ENCODE measurements at regions of chr3 and their contacts with region 1.

Region 1: GRCh38 chr3:70358978-70359580 is 46.6 kb upstream of the MDFIC2 start:
- DNase-seq: no peak
- H3K4me3 ChIP-seq: no peak overlapping the region
- H3K27ac ChIP-seq: no peak overlapping the region
- H3K27me3 ChIP-seq: no peaks in the 10 kb centered on the region
- CTCF ChIP-seq: peak; percentile 62 to 89 (median 74)

Region 2: DNA sequence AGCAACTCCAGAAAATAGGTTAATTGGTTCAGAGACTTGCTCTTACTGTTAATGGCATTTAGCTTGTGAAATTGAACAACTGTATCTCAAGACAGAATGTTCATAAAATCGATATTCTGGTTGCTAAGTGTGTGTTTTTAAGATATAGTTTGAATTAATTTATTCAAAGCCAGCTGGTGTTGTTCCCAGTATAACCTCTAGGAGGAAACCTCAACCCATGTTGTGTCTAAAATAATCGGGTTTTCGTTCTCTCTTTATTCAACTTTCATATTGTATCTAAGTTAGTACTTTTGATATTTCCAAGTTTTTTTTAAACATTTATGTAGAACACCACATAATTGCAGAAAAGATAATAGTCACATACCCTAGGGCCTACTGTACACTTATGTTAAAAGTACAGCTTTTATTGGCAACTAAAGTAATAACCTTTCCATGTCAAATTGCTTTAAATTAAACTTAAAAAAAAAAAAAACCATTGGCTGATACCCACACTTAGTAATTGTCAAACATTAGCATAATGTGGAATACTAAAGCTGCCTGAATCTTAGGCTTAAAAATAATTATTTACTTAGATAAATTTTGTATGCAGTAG is 268.7 kb before region 1 on chr3:
- intact Hi-C with region 1: loop called (anchors 5 kb)
- DNase-seq: no peak
- H3K4me3 ChIP-seq: peak overlapping the region in 7 of 59 donors; percentile 2 to 44 (median 20)
- H3K27ac ChIP-seq: no peak overlapping the region
- H3K27me3 ChIP-seq: peaks cover 0 to 5% (median 0%) of the 10 kb centered on the region in 45 donors
- CTCF ChIP-seq: peak; percentile 67 to 92 (median 80)

Region 3: DNA sequence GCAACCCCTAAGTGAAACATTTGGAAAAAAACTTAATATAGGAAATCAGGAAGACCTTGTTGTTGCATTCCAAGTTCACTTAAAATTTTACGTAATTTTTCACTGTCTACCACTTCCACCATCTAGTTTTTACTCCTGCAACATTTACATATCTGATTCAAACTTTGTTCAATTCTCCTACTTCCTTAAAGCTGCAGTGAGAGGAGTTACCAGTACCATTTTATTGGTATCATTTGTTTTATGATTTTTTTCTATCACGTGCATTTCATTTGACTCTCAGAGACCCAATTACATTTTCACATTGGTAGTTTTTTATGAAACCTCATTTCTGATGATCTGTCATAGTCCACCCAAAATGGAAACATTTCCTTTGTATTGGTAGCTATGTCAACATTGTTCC is 238.2 kb after region 1 on chr3:
- intact Hi-C with region 1: no loop called
- DNase-seq: no peak
- H3K4me3 ChIP-seq: no peak overlapping the region
- H3K27ac ChIP-seq: no peak overlapping the region
- H3K27me3 ChIP-seq: peaks cover 0 to 6% (median 0%) of the 10 kb centered on the region in 45 donors
- CTCF ChIP-seq: no peak

Measured in dorsolateral prefrontal cortex (tissue), 120 donors.